ENCODE measurements at regions of chr1 and their contacts with region 1.

Region 1: GRCh38 chr1:86913896-86914634 is at the start of gene SELENOF:
- DNase-seq: peak; percentile 99
- H3K4me3 Mint-ChIP-seq: no peak within 1 kb of the TSS
- H3K27ac Mint-ChIP-seq: no peak within 1 kb of the TSS
- H3K4me1 Mint-ChIP-seq: peaks cover 40% of the 10 kb centered on the region
- H3K27me3 Mint-ChIP-seq: no peaks in the 10 kb centered on the region
- total RNA-seq, gene SELENOF: 127 to 139 TPM

Region 2: DNA sequence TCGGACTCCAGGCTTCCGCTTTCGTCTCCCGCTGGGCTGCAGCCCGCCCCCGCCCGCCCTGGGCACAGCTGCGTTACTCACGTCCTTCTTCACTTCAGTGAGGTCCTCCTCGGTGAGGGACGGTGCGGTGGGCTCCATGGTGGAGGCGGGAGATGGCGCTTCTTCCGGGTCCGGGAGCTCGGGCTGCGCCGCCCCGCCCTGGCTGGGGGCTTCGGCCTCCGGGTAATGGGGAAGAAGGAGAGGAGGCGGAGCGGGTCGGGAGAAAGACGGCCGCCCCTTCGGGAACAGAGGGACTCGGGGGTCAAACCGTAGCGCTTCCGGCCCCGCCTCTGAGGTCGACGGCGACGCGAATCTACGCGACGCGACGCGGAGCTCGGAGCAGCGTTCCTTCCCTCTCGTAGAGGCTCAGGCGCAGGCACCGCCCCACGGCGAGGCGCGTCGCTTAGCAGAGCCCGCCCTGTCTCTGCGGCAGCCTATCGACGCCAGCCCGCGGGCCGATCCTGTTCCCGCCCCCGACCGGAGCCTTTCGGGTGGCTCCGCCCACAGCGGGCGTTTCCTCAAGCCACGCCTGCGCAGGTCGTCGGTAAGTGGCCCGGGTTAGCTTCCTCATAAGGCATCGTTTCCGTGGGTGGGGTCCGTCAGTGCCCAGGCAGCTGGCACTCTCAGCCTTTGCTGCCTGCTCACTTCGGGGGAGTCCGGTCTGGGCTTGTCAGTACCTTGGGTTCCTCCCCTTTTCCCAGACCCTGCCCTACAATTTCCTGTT is 1637.7 kb before region 1 on chr1 and contains the start of gene BCL10:
- CTCF ChIA-PET with region 1: no interaction called
- POLR2A ChIA-PET with region 1: no interaction called
- intact Hi-C with region 1: loop called (anchors 5 kb)
- DNase-seq: peak; percentile 98
- H3K4me3 Mint-ChIP-seq: peak within 1 kb of the TSS; percentile 82
- H3K27ac Mint-ChIP-seq: peak within 1 kb of the TSS; percentile 92
- H3K4me1 Mint-ChIP-seq: peaks cover 50% of the 10 kb centered on the region
- H3K27me3 Mint-ChIP-seq: peaks cover 5% of the 10 kb centered on the region
- total RNA-seq, gene BCL10: 31.1 to 31.5 TPM

Region 3: GRCh38 chr1:86704458-86704971 is 209.6 kb before region 1 on chr1 and contains the start of gene SH3GLB1:
- CTCF ChIA-PET with region 1: interaction called, 27 read pairs
- POLR2A ChIA-PET with region 1: interaction called, 20 read pairs
- intact Hi-C with region 1: loop called (anchors 1 kb)
- DNase-seq: peak; percentile 91
- H3K4me3 Mint-ChIP-seq: peak within 1 kb of the TSS; percentile 100
- H3K27ac Mint-ChIP-seq: peak within 1 kb of the TSS; percentile 98
- H3K4me1 Mint-ChIP-seq: peaks cover 41% of the 10 kb centered on the region
- H3K27me3 Mint-ChIP-seq: no peaks in the 10 kb centered on the region
- total RNA-seq, gene SH3GLB1: 64.3 to 65.3 TPM

Region 4: DNA sequence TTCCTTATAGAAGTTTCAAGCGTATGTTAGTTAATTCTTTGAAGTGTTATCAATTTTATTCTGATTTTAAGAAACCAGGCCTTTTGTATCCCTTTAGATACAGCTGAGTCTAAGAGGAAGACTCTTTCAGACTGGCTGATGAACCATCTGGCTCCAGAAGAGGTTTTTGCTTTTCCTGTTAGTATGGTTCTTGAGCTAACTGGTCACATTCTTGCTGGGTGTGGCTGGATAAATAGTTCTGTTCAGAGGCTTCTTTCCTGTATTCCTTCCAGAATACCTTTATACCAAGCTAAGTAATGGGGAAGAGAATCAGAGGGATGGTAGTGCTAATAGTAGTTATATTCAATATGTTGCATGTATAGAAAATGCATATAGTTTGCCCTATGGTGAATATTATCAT is 12.8 kb after region 1 on chr1:
- CTCF ChIA-PET with region 1: no interaction called
- POLR2A ChIA-PET with region 1: no interaction called
- intact Hi-C with region 1: no loop called
- DNase-seq: no peak
- H3K4me3 Mint-ChIP-seq: no peak overlapping the region
- H3K27ac Mint-ChIP-seq: no peak overlapping the region
- H3K4me1 Mint-ChIP-seq: peaks cover 19% of the 10 kb centered on the region
- H3K27me3 Mint-ChIP-seq: no peaks in the 10 kb centered on the region

Region 5: DNA sequence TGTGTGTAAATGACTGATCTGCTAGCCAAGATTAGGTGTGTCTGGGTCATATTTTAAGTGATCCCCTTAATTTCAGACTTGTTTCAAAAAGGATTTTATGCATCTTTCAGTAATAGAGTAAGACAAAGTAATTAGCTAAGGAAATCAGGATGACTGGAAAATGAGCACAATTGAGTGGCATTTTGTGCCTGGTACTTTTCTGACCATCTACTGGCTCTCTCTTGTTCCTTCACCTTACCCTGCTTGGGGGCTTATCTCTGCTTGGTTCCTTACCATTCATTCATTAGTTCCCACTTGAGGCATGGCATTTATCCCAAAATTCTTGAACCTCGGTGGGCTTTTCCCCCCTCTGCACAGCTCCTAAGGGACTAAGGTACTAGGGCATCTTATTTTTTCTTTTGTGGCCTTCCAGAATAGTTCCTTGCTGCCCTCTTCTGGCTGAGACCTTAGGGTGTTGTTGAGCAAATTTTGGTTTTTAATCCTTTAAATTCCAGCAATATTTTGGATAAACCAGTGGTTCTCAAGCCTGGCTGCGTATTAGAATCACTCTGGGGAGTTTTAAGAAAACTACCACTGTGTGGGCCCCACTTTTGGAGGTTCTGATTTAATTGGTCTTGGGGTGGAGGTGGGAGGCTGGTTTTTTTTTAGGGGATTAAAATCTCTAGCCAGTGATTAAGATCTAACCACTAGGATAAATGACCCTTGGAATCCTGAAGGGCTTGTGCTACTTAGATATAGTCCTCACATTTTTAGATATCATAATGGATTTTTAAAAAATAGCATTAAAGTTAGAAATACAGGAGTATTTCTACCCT is 51.2 kb after region 1 on chr1:
- CTCF ChIA-PET with region 1: no interaction called
- POLR2A ChIA-PET with region 1: no interaction called
- intact Hi-C with region 1: loop called (anchors 2 kb)
- DNase-seq: no peak
- H3K4me3 Mint-ChIP-seq: no peak overlapping the region
- H3K27ac Mint-ChIP-seq: no peak overlapping the region
- H3K4me1 Mint-ChIP-seq: no peaks in the 10 kb centered on the region
- H3K27me3 Mint-ChIP-seq: no peaks in the 10 kb centered on the region

Region 6: GRCh38 chr1:87077959-87078639 is 164.0 kb after region 1 on chr1:
- CTCF ChIA-PET with region 1: interaction called, 37 read pairs
- POLR2A ChIA-PET with region 1: no interaction called
- intact Hi-C with region 1: loop called (anchors 1 kb)
- DNase-seq: peak; percentile 12
- H3K4me3 Mint-ChIP-seq: no peak overlapping the region
- H3K27ac Mint-ChIP-seq: peak overlapping the region; percentile 47
- H3K4me1 Mint-ChIP-seq: peaks cover 18% of the 10 kb centered on the region
- H3K27me3 Mint-ChIP-seq: no peaks in the 10 kb centered on the region

Region 7: DNA sequence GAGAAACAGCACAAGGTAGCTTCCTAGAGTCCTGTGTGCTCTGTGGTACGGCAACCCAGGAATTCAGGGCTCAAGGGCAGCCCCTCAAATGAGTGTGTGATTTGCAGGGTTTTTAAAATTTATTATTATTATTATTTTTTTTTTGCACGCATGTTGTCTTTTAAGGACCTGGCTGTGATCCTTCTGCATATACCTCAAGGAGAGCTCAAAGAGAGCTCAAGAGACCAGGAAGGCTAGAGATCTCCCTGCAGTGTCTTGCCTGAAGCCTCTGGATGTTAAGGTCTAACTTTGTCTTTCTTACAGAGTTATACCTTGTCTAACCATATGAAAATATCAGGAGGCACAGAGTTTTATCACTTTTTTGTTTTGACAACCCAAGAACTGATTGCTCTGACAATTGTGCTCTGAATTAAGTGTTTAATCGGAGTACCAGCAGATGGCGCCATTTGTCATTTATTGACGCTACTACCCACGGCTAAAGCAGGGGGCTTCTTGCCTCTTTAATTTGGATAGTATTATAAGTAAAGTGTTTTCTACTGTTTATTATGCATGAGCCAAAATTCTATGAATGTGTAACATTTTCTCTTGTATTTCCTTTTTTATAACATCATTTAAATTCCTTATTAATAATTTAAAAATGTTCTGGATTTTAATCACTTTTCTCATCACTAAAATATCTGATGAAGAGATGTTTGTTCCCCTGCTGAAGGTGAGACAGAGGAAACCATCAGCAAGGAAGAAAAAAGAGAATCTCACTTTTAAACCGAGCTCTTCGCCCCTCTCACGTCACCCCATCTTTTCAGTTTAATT is 378.8 kb after region 1 on chr1:
- CTCF ChIA-PET with region 1: no interaction called
- POLR2A ChIA-PET with region 1: no interaction called
- intact Hi-C with region 1: no loop called
- DNase-seq: peak; percentile 59
- H3K4me3 Mint-ChIP-seq: no peak overlapping the region
- H3K27ac Mint-ChIP-seq: no peak overlapping the region
- H3K4me1 Mint-ChIP-seq: no peaks in the 10 kb centered on the region
- H3K27me3 Mint-ChIP-seq: peaks cover 9% of the 10 kb centered on the region

Region 8: DNA sequence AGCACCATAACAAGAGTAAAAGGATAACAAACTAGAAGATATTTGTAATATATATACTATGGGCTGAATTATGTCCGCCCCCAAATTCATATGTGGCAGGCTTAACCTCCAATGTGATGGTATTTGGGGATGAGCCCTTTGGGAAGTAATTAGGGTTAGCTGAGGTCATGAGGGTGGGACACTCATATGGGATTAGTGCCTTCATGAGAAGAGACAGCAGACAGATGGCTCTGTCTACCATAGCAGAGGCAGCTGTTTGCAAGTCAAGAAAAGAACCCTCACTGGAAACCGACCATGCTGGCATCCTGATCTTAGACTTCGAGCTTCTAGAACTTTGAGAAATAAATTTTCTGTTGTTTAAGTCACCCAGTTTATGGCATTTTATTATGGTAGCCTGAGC is 718.2 kb after region 1 on chr1:
- CTCF ChIA-PET with region 1: no interaction called
- POLR2A ChIA-PET with region 1: no interaction called
- intact Hi-C with region 1: no loop called
- DNase-seq: no peak
- H3K4me3 Mint-ChIP-seq: no peak overlapping the region
- H3K27ac Mint-ChIP-seq: no peak overlapping the region
- H3K4me1 Mint-ChIP-seq: no peaks in the 10 kb centered on the region
- H3K27me3 Mint-ChIP-seq: peaks cover 1% of the 10 kb centered on the region

Region 9: GRCh38 chr1:88683541-88684481 is 1769.7 kb after region 1 on chr1 and contains the start of gene PKN2:
- CTCF ChIA-PET with region 1: no interaction called
- POLR2A ChIA-PET with region 1: no interaction called
- intact Hi-C with region 1: loop called (anchors 1 kb)
- DNase-seq: peak; percentile 98
- H3K4me3 Mint-ChIP-seq: peak within 1 kb of the TSS; percentile 92
- H3K27ac Mint-ChIP-seq: peak within 1 kb of the TSS; percentile 95
- H3K4me1 Mint-ChIP-seq: peaks cover 22% of the 10 kb centered on the region
- H3K27me3 Mint-ChIP-seq: no peaks in the 10 kb centered on the region
- total RNA-seq, gene PKN2: 16.2 to 17.9 TPM